Activated CD4-positive, alpha-beta T cell treated with anti-CD3 and anti-CD28 coated beads for 36 hours (primary cell): ENCODE measurements at regions of chr19 and their contacts with region 1.

Region 1: DNA sequence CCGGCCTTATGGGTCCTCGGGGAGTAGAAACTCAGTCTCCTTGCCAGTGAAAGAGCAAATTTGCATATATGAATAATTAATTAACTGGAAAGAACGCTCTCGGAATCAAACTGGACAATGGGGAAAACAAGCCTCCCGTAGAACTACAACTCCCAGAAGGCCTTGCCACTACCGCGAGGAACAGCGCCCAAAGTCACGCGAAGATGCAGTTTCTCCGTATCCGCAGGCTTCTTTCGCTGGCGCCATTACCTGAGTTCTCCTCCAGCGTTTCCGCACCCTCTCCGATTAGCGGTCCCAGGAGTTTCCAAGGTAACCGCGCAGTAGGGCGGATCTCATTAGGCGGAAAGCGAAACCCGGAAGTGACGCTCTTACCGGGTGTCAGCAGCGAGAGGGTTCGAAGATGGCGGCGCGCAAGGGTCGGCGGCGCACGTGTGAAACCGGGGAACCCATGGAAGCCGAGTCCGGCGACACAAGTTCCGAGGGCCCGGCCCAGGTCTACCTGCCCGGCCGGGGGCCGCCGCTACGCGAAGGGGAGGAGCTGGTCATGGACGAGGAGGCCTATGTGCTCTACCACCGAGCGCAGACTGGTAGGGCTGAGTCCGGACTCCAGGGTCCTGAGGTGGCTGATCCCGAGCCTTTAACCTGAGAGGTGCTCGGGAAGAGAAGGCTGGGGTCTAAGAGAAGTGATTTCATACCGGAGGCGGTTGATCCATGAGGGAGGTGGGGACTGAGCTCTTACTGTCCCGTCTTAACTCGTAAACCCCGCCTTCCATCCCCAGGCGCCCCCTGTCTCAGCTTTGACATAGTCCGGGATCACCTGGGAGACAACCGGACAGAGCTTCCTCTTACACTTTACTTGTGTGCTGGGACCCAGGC is at the start of gene GRWD1:
- DNase-seq: peak; percentile 97
- ATAC-seq: peak; percentile 98
- H3K4me3 Mint-ChIP-seq: peak within 1 kb of the TSS; percentile 86
- H3K27ac Mint-ChIP-seq: peak within 1 kb of the TSS; percentile 89
- H3K4me1 Mint-ChIP-seq: peaks cover 37% of the 10 kb centered on the region
- H3K27me3 Mint-ChIP-seq: peaks cover 20% of the 10 kb centered on the region
- total RNA-seq, gene GRWD1: 43.4 to 51.3 TPM

Region 2: GRCh38 chr19:48249502-48250014 is 196.3 kb before region 1 on chr19:
- CTCF ChIA-PET with region 1: no interaction called
- POLR2A ChIA-PET with region 1: no interaction called
- intact Hi-C with region 1: loop called in 1 of 2 experiments (anchors 2 kb)
- DNase-seq: peak; percentile 91
- ATAC-seq: peak; percentile 81
- H3K4me3 Mint-ChIP-seq: peak overlapping the region; percentile 84
- H3K27ac Mint-ChIP-seq: peak overlapping the region; percentile 93
- H3K4me1 Mint-ChIP-seq: peaks cover 76% of the 10 kb centered on the region
- H3K27me3 Mint-ChIP-seq: no peaks in the 10 kb centered on the region

Region 3: DNA sequence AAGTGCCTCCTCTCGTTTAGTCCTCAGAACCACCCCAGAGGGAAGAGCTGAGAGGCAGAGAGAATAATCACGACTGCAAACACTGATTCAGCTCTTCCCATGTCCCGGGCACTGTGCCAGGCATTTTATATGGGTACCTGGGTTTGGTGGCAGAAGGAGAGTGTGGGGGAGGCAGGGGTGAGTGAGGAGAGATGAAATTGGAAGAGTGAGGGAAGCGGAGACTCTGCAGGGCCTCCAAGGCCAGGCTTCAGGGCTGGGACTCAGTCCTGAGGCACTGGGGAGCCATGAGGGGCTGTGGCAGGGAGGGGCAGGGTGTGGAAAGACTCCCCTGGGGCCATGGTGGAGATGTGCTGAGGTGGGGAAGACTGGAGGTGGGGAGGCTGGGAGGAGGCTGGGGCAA is 72.9 kb before region 1 on chr19:
- CTCF ChIA-PET with region 1: no interaction called
- POLR2A ChIA-PET with region 1: no interaction called
- intact Hi-C with region 1: no loop called
- DNase-seq: no peak
- ATAC-seq: no peak
- H3K4me3 Mint-ChIP-seq: no peak overlapping the region
- H3K27ac Mint-ChIP-seq: no peak overlapping the region
- H3K4me1 Mint-ChIP-seq: no peaks in the 10 kb centered on the region
- H3K27me3 Mint-ChIP-seq: no peaks in the 10 kb centered on the region

Region 4: DNA sequence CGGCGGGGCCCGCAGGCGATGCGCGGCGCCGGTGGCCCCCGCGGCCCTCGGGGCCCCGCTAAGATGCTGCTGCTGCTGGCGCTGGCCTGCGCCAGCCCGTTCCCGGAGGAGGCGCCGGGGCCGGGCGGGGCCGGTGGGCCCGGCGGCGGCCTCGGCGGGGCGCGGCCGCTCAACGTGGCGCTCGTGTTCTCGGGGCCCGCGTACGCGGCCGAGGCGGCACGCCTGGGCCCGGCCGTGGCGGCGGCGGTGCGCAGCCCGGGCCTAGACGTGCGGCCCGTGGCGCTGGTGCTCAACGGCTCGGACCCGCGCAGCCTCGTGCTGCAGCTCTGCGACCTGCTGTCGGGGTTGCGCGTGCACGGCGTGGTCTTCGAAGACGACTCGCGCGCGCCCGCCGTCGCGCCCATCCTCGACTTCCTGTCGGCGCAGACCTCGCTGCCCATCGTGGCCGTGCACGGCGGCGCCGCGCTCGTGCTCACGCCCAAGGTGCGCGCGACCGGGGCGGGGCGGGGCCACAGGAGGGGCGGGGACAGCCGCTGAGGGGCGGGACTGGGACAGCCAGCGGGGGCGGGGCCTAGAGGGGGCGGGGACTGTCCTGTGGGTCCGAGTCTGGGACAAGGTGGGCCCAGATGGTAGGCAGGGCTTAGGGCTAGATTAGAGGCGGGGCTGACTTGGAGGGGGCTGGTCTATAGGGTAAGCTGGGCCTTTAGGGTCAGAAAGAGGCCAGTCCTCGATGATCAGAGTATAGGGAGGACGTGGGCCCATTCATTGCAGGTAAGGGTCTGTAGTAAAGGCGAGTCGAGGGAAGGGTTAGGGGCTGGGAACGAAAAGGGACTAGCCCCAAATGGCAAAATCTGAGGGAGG is 47.2 kb before region 1 on chr19:
- CTCF ChIA-PET with region 1: no interaction called
- POLR2A ChIA-PET with region 1: no interaction called
- intact Hi-C with region 1: loop called in 1 of 2 experiments (anchors 1 kb)
- DNase-seq: peak; percentile 94
- ATAC-seq: peak; percentile 68
- H3K4me3 Mint-ChIP-seq: peak overlapping the region; percentile 83
- H3K27ac Mint-ChIP-seq: no peak overlapping the region
- H3K4me1 Mint-ChIP-seq: peaks cover 29% of the 10 kb centered on the region
- H3K27me3 Mint-ChIP-seq: peaks cover 31% of the 10 kb centered on the region

Region 5: GRCh38 chr19:48513289-48514122 is 67.7 kb after region 1 on chr19:
- CTCF ChIA-PET with region 1: no interaction called
- POLR2A ChIA-PET with region 1: no interaction called
- intact Hi-C with region 1: loop called (anchors 1 to 2 kb)
- DNase-seq: peak; percentile 86
- ATAC-seq: peak; percentile 81
- H3K4me3 Mint-ChIP-seq: no peak overlapping the region
- H3K27ac Mint-ChIP-seq: peak overlapping the region; percentile 30
- H3K4me1 Mint-ChIP-seq: peaks cover 8% of the 10 kb centered on the region
- H3K27me3 Mint-ChIP-seq: no peaks in the 10 kb centered on the region

Region 6: DNA sequence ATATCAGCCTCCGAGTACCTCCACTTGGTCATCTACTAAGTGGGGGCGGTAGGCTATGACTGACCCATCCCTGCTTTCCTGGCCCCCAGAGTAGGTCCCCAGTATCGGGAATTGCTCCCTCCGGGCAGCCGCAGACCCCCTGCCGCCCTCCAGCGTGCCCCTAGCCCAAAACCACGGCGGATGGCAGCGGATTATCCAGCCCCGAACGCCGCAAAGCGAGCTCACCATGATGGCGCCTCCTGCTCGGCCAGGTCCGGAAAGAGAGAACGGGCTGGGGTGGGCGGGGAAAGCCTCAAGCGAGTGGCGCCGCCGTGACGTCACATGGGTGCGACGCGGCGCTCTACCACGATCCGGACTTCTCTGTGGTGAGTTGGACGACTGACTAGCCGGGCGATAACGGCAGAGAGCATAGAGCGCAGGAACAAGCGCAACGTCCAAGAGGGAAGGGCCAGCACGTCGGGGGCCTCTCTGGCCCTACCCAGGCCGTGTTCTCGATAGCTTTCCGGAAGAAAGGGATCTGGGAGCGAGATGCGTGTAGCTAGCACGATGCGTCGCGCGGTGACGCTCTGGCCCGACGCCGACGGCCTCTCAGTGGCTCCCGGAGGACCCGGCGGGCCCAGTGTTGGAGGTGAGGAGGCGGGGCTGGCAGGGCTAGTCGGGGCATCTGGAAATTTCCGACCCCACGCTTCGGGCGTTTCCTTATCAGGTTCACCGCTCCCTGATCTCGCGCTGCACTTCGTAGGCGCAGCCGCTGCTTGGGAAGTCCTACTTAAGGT is 173.3 kb after region 1 on chr19 and contains the starts of genes RPL18 and SPHK2:
- CTCF ChIA-PET with region 1: no interaction called
- POLR2A ChIA-PET with region 1: no interaction called
- intact Hi-C with region 1: loop called in 1 of 2 experiments (anchors 1 kb)
- DNase-seq: peak; percentile 97
- ATAC-seq: peak; percentile 82
- H3K4me3 Mint-ChIP-seq: peak within 1 kb of the TSS; percentile 94
- H3K27ac Mint-ChIP-seq: peak within 1 kb of the TSS; percentile 97
- H3K4me1 Mint-ChIP-seq: peaks cover 48% of the 10 kb centered on the region
- H3K27me3 Mint-ChIP-seq: no peaks in the 10 kb centered on the region
- total RNA-seq, gene RPL18: 2,026 to 2,191 TPM
- total RNA-seq, gene SPHK2: 27.0 TPM